ENCODE measurements at regions of chr11 and their contacts with region 1.

Region 1: GRCh38 chr11:78188286-78189173 is at the starts of genes KCTD21 and USP35:
- H3K4me3 Mint-ChIP-seq: peak within 1 kb of the TSS; percentile 97
- H3K27ac Mint-ChIP-seq: peak within 1 kb of the TSS; percentile 93
- H3K4me1 Mint-ChIP-seq: peaks cover 59% of the 10 kb centered on the region
- H3K27me3 Mint-ChIP-seq: no peaks in the 10 kb centered on the region

Region 2: DNA sequence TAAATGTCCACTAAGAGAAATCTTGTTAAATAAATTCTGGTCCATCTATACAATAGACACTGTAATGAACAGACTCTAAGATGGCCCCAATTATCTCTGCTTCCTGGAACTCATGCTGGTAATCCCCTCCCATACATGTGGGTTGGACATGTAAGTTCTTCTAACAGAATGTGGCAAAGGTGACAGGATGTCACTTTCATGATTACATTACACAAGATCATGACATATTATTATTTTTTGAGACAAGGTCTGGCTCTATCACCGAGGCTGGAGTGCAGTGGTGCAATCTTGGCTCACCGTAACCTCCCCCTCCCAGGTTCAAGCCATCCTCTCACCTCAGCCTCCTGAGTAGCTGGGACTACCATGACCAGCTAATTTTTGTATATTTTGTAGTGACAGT is 94.3 kb before region 1 on chr11:
- intact Hi-C with region 1: no loop called
- H3K4me3 Mint-ChIP-seq: no peak overlapping the region
- H3K27ac Mint-ChIP-seq: no peak overlapping the region
- H3K4me1 Mint-ChIP-seq: no peaks in the 10 kb centered on the region
- H3K27me3 Mint-ChIP-seq: no peaks in the 10 kb centered on the region

Region 3: DNA sequence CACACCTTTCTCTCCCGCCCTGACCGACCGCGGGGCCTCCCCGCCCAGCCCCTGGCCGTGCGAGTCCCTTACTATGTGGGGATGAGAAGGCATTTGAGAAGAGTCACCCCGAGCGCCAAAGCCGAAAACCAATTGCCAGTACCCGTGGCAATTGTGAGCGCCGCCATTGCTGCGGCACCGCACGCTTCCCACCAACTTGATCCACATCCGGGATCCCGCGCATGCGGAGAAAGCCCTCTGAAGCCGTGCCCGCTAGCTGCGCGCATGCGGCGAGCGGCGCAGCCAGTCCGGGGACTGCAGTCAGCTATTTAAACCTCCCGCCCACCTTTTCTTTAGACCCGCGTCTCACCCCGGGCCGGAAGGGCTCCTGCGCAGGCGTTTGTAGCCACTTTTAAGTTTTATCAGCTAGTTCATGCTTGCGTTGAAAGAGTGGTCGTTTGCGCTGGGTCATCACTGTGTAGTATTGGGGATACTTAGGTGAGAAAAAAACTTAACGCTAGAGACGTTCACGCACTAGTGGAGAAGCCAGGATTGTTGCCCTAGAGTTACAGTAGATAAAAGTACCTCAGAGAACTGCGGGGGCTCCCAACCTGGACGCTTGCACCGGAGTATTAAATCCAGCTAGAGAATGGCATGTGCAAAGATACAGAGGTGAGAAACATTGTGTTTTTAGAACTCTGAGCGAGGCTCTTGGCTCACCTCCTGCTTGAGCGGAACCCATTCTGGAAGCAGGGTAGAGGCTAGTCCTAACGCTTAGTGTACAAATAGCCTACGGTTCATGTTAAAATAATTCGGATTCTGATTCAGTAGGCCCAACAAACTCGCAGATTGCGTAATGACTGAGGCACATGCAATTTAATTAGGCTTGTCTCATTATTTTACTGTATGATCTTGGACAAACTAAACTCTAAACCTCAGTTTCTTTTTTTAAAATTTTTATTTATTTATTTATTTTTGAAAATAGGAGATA is 48.8 kb before region 1 on chr11 and contains the start of gene ALG8:
- intact Hi-C with region 1: loop called (anchors 2 kb)
- H3K4me3 Mint-ChIP-seq: peak within 1 kb of the TSS; percentile 83
- H3K27ac Mint-ChIP-seq: peak within 1 kb of the TSS; percentile 88
- H3K4me1 Mint-ChIP-seq: peaks cover 31% of the 10 kb centered on the region
- H3K27me3 Mint-ChIP-seq: peaks cover 2% of the 10 kb centered on the region

Region 4: GRCh38 chr11:78350646-78351165 is 162.2 kb after region 1 on chr11:
- intact Hi-C with region 1: no loop called
- H3K4me3 Mint-ChIP-seq: peak overlapping the region; percentile 43
- H3K27ac Mint-ChIP-seq: peak overlapping the region; percentile 98
- H3K4me1 Mint-ChIP-seq: peaks cover 91% of the 10 kb centered on the region
- H3K27me3 Mint-ChIP-seq: no peaks in the 10 kb centered on the region

Measured in dendritic cell treated with granulocyte-macrophage colony-stimulating factor and Interleukin-4, amounts not matched to agents 40 ng/mL and 50 ng/mL, for 4 days (primary cell).